Naive thymus-derived CD4-positive, alpha-beta T cell (primary cell): ENCODE measurements at regions of chr3 and their contacts with region 1.

Region 1: DNA sequence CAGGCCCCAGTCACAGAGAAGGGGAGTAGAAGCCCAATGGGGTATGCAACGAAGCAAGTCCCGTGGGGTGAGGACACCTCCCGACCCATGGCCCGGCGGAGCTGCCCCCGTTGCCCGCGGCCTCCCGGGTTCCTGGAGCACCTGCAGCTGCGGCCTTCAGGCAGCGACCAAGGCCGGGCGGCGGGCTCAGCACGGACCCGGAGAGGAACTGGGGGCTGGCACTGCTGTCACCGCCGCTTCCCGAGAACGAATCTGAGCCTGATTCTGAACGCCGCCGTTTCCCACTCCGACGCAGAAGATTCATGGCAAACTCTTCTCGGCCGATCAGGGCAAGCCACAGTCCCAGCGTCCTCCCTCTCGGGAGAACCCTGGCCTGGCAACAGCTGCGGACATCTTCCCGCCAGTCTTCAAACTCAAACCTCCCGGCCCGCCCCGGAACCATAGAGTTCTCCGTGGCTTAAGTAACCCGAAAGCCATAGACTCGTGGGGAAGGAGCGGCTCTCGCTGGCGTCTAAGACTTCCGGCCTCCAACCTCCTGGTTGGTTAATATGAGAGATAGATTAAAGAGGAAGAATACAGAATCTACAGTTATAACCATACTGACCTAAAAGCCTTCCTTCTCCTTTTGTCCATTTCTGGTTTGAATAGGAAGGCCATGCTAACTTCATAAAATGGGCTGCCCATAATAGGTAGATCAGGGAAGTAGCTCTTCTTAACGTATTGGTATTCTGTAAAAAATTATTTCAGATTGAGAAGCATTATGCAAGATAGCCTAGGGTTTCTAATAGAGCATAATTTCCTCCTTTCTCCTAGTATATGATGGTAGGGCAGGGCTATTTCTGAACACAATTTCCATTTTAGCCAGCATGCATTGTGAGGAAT is at the start of gene POLQ:
- DNase-seq: peak; percentile 64 to 89 (median 82)
- ATAC-seq: peak; percentile 99
- H3K4me3 ChIP-seq: peak within 1 kb of the TSS; percentile 81
- H3K4me3 Mint-ChIP-seq: peak within 1 kb of the TSS; percentile 87 to 95 (median 92)
- H3K27ac ChIP-seq: peak within 1 kb of the TSS; percentile 70
- H3K27ac Mint-ChIP-seq: peak within 1 kb of the TSS; percentile 84 to 97 (median 94)
- H3K4me1 ChIP-seq: peaks cover 0 to 5% of the 10 kb centered on the region in 2 donors
- H3K4me1 Mint-ChIP-seq: peaks cover 6 to 38% (median 10%) of the 10 kb centered on the region in 7 donors
- H3K27me3 ChIP-seq: no peaks in the 10 kb centered on the region
- H3K27me3 Mint-ChIP-seq: no peaks in the 10 kb centered on the region
- total RNA-seq, gene POLQ: 0.17 to 26.6 (median 0.38) TPM

Region 2: GRCh38 chr3:121399820-121400219 is 146.0 kb before region 1 on chr3:
- CTCF ChIA-PET with region 1: no interaction called
- POLR2A ChIA-PET with region 1: no interaction called
- intact Hi-C with region 1: no loop called
- DNase-seq: no peak
- ATAC-seq: no peak
- H3K4me3 ChIP-seq: no peak overlapping the region
- H3K4me3 Mint-ChIP-seq: no peak overlapping the region
- H3K27ac ChIP-seq: no peak overlapping the region
- H3K27ac Mint-ChIP-seq: no peak overlapping the region
- H3K4me1 ChIP-seq: no peaks in the 10 kb centered on the region
- H3K4me1 Mint-ChIP-seq: no peaks in the 10 kb centered on the region
- H3K27me3 ChIP-seq: no peaks in the 10 kb centered on the region
- H3K27me3 Mint-ChIP-seq: peaks cover 3 to 29% (median 15%) of the 10 kb centered on the region in 5 donors

Region 3: DNA sequence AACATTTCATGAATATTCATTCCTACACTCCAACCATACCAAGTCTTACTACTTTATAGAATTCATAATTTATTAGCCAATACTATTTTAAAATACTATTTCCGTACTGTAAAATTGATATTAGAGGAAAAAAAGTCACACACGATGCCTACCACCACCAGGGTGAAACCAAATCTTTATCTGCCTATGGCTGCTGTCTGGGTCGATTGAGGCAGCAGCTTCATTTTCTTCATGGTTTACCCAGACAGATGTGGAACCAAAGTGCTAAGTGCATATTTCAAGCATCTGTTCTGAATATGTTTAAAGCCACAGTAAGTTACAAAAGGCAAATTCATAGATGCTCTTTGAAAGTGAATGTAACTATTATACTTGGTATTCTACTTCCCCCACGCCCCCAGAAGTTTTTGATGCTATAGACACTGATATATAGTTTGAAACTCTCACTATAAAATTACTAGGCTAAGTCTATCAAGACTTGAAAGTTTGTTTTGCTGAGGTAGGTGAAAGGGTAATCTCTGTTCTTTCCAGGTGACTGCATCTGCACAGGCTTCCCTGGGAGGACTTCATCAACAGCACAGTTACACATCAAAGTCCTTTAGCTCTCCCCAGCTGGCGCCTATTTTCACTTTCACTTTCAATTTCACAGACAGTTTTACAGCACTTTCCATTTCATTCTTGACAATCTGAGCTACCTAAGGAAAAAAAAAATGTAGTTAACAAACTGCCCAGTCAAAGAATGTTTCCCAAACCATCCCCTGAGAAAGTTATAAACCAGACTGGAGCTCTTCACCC is 113.9 kb before region 1 on chr3:
- CTCF ChIA-PET with region 1: no interaction called
- POLR2A ChIA-PET with region 1: no interaction called
- intact Hi-C with region 1: loop called (anchors 1 kb)
- DNase-seq: peak in 8 of 9 donors; percentile 36 to 80 (median 74)
- ATAC-seq: peak; percentile 89
- H3K4me3 ChIP-seq: peak overlapping the region; percentile 52
- H3K4me3 Mint-ChIP-seq: peak overlapping the region; percentile 46 to 84 (median 76)
- H3K27ac ChIP-seq: peak overlapping the region; percentile 33
- H3K27ac Mint-ChIP-seq: peak overlapping the region; percentile 48 to 92 (median 84)
- H3K4me1 ChIP-seq: peaks cover 0 to 9% of the 10 kb centered on the region in 2 donors
- H3K4me1 Mint-ChIP-seq: peaks cover 6 to 31% (median 24%) of the 10 kb centered on the region in 7 donors
- H3K27me3 ChIP-seq: no peaks in the 10 kb centered on the region
- H3K27me3 Mint-ChIP-seq: no peaks in the 10 kb centered on the region

Region 4: GRCh38 chr3:121834696-121835464 is 289.1 kb after region 1 on chr3 and contains the starts of genes EAF2 and IQCB1:
- CTCF ChIA-PET with region 1: no interaction called
- POLR2A ChIA-PET with region 1: no interaction called
- intact Hi-C with region 1: loop called (anchors 1 kb)
- DNase-seq: peak; percentile 93 to 98 (median 97)
- ATAC-seq: peak; percentile 99
- H3K4me3 ChIP-seq: peak within 1 kb of the TSS; percentile 85
- H3K4me3 Mint-ChIP-seq: peak within 1 kb of the TSS; percentile 83 to 97 (median 93)
- H3K27ac ChIP-seq: peak within 1 kb of the TSS; percentile 89
- H3K27ac Mint-ChIP-seq: peak within 1 kb of the TSS; percentile 78 to 98 (median 92)
- H3K4me1 ChIP-seq: peaks cover 10 to 14% of the 10 kb centered on the region in 2 donors
- H3K4me1 Mint-ChIP-seq: peaks cover 32 to 65% (median 58%) of the 10 kb centered on the region in 7 donors
- H3K27me3 ChIP-seq: no peaks in the 10 kb centered on the region
- H3K27me3 Mint-ChIP-seq: no peaks in the 10 kb centered on the region
- total RNA-seq, gene EAF2: 6.4 to 16.1 (median 7.5) TPM
- total RNA-seq, gene IQCB1: 32.6 to 45.6 (median 35.8) TPM

Region 5: GRCh38 chr3:122101646-122102045 is 555.8 kb after region 1 on chr3:
- CTCF ChIA-PET with region 1: interaction called, 4 read pairs
- POLR2A ChIA-PET with region 1: no interaction called
- intact Hi-C with region 1: loop called in 1 of 2 experiments (anchors 1 kb)
- DNase-seq: peak in 7 of 9 donors; percentile 19 to 66 (median 54)
- ATAC-seq: peak; percentile 79
- H3K4me3 ChIP-seq: no peak overlapping the region
- H3K4me3 Mint-ChIP-seq: peak overlapping the region in 1 of 10 donors; percentile 4
- H3K27ac ChIP-seq: no peak overlapping the region
- H3K27ac Mint-ChIP-seq: no peak overlapping the region
- H3K4me1 ChIP-seq: peaks cover 0 to 5% of the 10 kb centered on the region in 2 donors
- H3K4me1 Mint-ChIP-seq: peaks cover 0 to 37% (median 10%) of the 10 kb centered on the region in 7 donors
- H3K27me3 ChIP-seq: no peaks in the 10 kb centered on the region
- H3K27me3 Mint-ChIP-seq: no peaks in the 10 kb centered on the region

Region 6: GRCh38 chr3:122415720-122416654 is 870.2 kb after region 1 on chr3 and contains the start of gene WDR5B:
- CTCF ChIA-PET with region 1: no interaction called
- POLR2A ChIA-PET with region 1: interaction called, 3 read pairs
- intact Hi-C with region 1: loop called in 1 of 2 experiments (anchors 1 kb)
- DNase-seq: peak; percentile 95 to 99 (median 99)
- ATAC-seq: peak; percentile 94
- H3K4me3 ChIP-seq: peak within 1 kb of the TSS; percentile 96
- H3K4me3 Mint-ChIP-seq: peak within 1 kb of the TSS; percentile 92 to 99 (median 97)
- H3K27ac ChIP-seq: peak within 1 kb of the TSS; percentile 93
- H3K27ac Mint-ChIP-seq: peak within 1 kb of the TSS; percentile 98 to 100 (median 100)
- H3K4me1 ChIP-seq: peaks cover 19 to 24% of the 10 kb centered on the region in 2 donors
- H3K4me1 Mint-ChIP-seq: peaks cover 24 to 72% (median 65%) of the 10 kb centered on the region in 7 donors
- H3K27me3 ChIP-seq: no peaks in the 10 kb centered on the region
- H3K27me3 Mint-ChIP-seq: peaks cover 0 to 3% (median 0%) of the 10 kb centered on the region in 5 donors
- total RNA-seq, gene WDR5B: 4.8 to 19.4 (median 6.4) TPM

Region 7: DNA sequence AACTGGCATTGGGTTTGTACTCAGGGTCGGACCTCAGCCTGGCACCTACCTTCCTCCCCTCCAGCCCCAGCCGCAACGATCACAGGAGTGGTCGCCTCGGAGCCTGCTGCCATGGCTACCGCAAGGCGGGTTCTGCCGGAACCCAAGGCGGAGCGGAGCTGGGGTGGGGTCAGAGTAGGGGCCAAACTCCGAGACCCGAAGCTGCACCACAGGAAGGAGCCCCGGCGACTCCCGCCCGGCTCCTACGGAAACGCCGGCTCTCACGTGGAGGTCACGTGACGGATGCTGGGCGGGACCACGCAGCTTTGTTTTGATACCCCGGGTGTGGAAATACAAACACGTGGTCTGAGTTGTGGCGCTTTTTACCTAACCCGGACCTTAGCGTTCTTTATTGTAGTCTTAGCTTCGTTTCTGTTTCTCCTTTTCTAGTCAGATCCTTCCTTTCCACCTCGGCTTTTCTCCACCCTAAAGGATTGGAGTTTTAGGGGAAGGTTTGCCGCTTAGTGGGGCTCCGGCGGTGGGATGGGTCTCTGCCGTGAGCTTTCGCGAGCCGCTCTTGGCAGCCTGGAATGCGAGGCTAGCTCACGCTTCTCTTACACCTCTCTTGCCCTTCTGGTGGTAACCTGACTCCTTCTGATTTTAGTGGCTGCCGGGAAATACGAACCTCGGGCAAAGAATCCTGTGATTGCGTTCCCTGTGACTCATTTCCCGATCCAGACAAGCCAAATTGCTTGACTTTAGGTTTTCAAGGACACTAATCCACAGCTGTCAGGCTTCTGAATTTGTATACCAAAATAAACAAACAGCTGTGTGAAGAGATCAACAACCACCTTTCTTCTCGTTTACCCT is 1248.0 kb after region 1 on chr3 and contains the start of gene HSPBAP1:
- CTCF ChIA-PET with region 1: no interaction called
- POLR2A ChIA-PET with region 1: no interaction called
- intact Hi-C with region 1: loop called (anchors 1 to 5 kb)
- DNase-seq: peak; percentile 71 to 90 (median 86)
- ATAC-seq: peak; percentile 77
- H3K4me3 ChIP-seq: peak within 1 kb of the TSS; percentile 83
- H3K4me3 Mint-ChIP-seq: peak within 1 kb of the TSS in 5 of 10 donors; percentile 91 to 97 (median 95)
- H3K27ac ChIP-seq: peak within 1 kb of the TSS; percentile 82
- H3K27ac Mint-ChIP-seq: peak within 1 kb of the TSS in 6 of 9 donors; percentile 79 to 99 (median 96)
- H3K4me1 ChIP-seq: peaks cover 22 to 34% of the 10 kb centered on the region in 2 donors
- H3K4me1 Mint-ChIP-seq: peaks cover 20 to 29% (median 27%) of the 10 kb centered on the region in 7 donors
- H3K27me3 ChIP-seq: no peaks in the 10 kb centered on the region
- H3K27me3 Mint-ChIP-seq: no peaks in the 10 kb centered on the region
- total RNA-seq, gene HSPBAP1: 9.0 to 31.5 (median 23.3) TPM

Region 8: DNA sequence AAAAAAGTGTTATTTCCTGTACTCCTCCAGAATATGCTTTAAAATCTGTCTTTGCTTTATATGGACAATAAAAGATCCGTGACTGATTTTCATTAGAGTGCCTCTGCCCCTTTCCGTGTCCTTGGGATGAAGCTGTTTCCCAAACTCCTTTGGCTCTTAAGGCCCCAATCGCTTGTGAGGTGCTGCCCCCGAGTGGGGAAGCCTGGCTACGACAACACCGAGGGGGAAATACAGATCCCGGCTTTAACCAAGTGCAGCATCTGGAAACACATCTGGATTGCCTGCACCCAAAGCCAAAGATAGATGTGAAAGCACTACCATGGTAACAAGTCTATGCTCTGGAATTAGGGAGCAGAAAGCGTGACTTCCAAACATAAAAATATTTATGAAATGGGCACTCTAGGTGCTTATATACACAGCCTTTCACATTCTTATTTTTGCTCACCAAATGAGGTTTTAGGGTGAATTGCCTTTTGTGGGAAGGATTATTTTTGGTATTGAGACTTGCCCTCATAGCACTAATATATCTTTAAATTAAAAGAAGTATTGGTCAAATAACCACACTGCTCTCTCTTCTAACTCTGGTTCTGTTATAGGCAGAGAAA is 1943.7 kb after region 1 on chr3:
- CTCF ChIA-PET with region 1: no interaction called
- POLR2A ChIA-PET with region 1: no interaction called
- intact Hi-C with region 1: loop called in 1 of 2 experiments (anchors 1 kb)
- DNase-seq: peak in 5 of 9 donors; percentile 4 to 46 (median 11)
- ATAC-seq: peak; percentile 52
- H3K4me3 ChIP-seq: no peak overlapping the region
- H3K4me3 Mint-ChIP-seq: no peak overlapping the region
- H3K27ac ChIP-seq: no peak overlapping the region
- H3K27ac Mint-ChIP-seq: peak overlapping the region in 2 of 9 donors; percentile 2 to 29
- H3K4me1 ChIP-seq: peaks cover 0 to 11% of the 10 kb centered on the region in 2 donors
- H3K4me1 Mint-ChIP-seq: peaks cover 0 to 2% (median 0%) of the 10 kb centered on the region in 7 donors
- H3K27me3 ChIP-seq: no peaks in the 10 kb centered on the region
- H3K27me3 Mint-ChIP-seq: peaks cover 0 to 5% (median 0%) of the 10 kb centered on the region in 5 donors